ENCODE measurements at regions of chr1 and their contacts with region 1.

Region 1: DNA sequence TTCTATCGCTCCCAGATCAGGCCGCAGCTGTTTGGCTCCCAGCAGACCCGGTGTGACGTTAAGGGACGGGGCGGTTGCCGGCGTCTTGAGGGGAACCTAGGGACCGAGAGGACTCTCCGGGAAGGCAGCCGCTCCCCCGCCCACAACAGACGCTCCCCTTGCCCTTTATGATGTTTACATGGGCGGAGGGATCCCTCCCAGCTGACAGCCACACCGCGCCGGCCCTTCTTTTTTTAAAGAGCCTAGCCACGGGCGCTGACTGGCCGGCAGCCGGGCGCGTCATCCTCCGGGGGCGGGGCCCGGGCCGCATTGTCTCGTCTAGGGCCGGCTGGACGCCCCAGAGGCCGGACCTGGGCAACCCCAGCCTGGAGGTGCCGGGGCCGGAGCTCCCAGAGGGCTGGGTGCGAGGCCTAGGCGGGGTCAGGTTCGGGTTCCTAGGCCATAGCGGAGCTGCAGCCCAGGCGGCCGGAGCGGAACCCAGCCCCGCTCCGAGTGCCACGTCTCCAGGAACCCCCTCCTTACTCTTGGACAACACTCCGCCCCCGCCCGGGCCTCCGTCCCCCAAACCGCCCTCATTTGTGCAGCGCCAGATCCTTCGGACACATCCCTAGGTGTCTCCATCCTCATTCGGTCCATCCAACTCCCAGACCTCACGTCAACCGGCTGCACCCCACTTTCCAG is at the start of gene PCAT6:
- DNase-seq: peak; percentile 70 to 90 (median 83)
- ATAC-seq: peak; percentile 90
- H3K4me3 ChIP-seq: peak within 1 kb of the TSS; percentile 84
- H3K4me3 Mint-ChIP-seq: peak within 1 kb of the TSS; percentile 88 to 94 (median 90)
- H3K27ac ChIP-seq: peak within 1 kb of the TSS; percentile 70
- H3K27ac Mint-ChIP-seq: peak within 1 kb of the TSS; percentile 49 to 93 (median 90)
- H3K4me1 ChIP-seq: peaks cover 19% of the 10 kb centered on the region in 2 donors
- H3K4me1 Mint-ChIP-seq: peaks cover 27 to 42% (median 39%) of the 10 kb centered on the region in 7 donors
- H3K27me3 ChIP-seq: no peaks in the 10 kb centered on the region
- H3K27me3 Mint-ChIP-seq: peaks cover 0 to 18% (median 0%) of the 10 kb centered on the region in 5 donors
- total RNA-seq, gene PCAT6: 0.70 to 1.5 (median 0.94) TPM in 4 of 5 experiments, not detected in the other

Region 2: GRCh38 chr1:202348509-202349205 is 462.1 kb before region 1 on chr1 and contains the start of gene PPP1R12B:
- CTCF ChIA-PET with region 1: no interaction called
- POLR2A ChIA-PET with region 1: no interaction called
- intact Hi-C with region 1: loop called (anchors 5 kb)
- DNase-seq: peak; percentile 83 to 95 (median 92)
- ATAC-seq: peak; percentile 98
- H3K4me3 ChIP-seq: peak within 1 kb of the TSS; percentile 82
- H3K4me3 Mint-ChIP-seq: peak within 1 kb of the TSS; percentile 87 to 97 (median 93)
- H3K27ac ChIP-seq: peak within 1 kb of the TSS; percentile 73
- H3K27ac Mint-ChIP-seq: peak within 1 kb of the TSS; percentile 64 to 97 (median 86)
- H3K4me1 ChIP-seq: peaks cover 3 to 16% of the 10 kb centered on the region in 2 donors
- H3K4me1 Mint-ChIP-seq: peaks cover 22 to 40% (median 34%) of the 10 kb centered on the region in 7 donors
- H3K27me3 ChIP-seq: no peaks in the 10 kb centered on the region
- H3K27me3 Mint-ChIP-seq: no peaks in the 10 kb centered on the region
- total RNA-seq, gene PPP1R12B: 23.6 to 38.1 (median 31.0) TPM

Region 3: DNA sequence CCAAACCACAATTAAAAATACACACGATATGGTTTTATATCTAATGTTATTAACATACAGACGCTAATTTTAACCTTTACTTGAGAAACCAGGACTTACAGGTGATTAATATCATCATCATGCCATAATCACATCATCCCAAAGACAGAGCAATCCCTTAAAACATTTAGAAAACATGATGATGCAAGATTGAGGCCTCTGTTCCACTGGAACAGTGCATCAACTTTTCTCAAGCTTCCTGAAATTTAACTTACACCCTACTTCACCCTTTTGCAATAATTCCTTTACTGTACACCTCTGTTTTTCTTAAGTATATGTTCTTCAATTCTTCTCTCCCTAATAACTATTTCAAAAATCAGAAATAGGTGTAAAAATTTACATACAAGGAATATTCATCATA is 40.6 kb before region 1 on chr1:
- CTCF ChIA-PET with region 1: no interaction called
- POLR2A ChIA-PET with region 1: no interaction called
- intact Hi-C with region 1: no loop called
- DNase-seq: no peak
- ATAC-seq: no peak
- H3K4me3 ChIP-seq: no peak overlapping the region
- H3K4me3 Mint-ChIP-seq: no peak overlapping the region
- H3K27ac ChIP-seq: no peak overlapping the region
- H3K27ac Mint-ChIP-seq: peak overlapping the region in 1 of 9 donors; percentile 38
- H3K4me1 ChIP-seq: no peaks in the 10 kb centered on the region
- H3K4me1 Mint-ChIP-seq: no peaks in the 10 kb centered on the region
- H3K27me3 ChIP-seq: no peaks in the 10 kb centered on the region
- H3K27me3 Mint-ChIP-seq: no peaks in the 10 kb centered on the region

Region 4: GRCh38 chr1:202788800-202789199 is 22.0 kb before region 1 on chr1:
- CTCF ChIA-PET with region 1: no interaction called
- POLR2A ChIA-PET with region 1: no interaction called
- intact Hi-C with region 1: no loop called
- DNase-seq: no peak
- ATAC-seq: no peak
- H3K4me3 ChIP-seq: no peak overlapping the region
- H3K4me3 Mint-ChIP-seq: no peak overlapping the region
- H3K27ac ChIP-seq: no peak overlapping the region
- H3K27ac Mint-ChIP-seq: peak overlapping the region in 2 of 9 donors; percentile 41 to 88
- H3K4me1 ChIP-seq: no peaks in the 10 kb centered on the region
- H3K4me1 Mint-ChIP-seq: peaks cover 14 to 54% (median 40%) of the 10 kb centered on the region in 7 donors
- H3K27me3 ChIP-seq: no peaks in the 10 kb centered on the region
- H3K27me3 Mint-ChIP-seq: no peaks in the 10 kb centered on the region

Region 5: DNA sequence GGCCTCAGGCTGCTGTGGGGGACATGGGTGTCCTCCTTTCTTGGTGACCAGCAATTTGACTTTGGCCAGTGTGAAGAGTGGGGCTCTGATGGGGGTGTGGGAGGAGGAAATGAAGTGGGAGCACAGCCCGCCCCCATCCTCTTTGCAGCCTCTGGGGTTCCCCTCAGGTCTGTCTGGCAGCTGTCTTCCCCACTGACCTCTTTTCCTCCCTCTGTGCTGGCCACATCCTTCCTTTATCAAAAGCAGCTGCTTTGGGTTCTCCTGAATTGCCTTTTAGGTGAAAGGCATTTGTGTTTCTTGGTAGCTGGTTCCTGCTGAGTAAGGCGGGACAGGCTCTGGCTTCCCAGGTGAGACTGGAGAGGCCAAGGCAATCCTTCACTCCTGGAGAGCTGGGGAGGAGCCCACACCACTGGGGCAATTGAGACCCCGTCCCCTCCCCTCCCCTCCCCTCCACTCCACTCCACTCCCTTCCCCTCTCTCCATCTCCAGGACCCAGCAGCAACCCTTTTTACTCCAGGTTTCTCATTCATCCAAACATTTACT is 24.9 kb after region 1 on chr1:
- CTCF ChIA-PET with region 1: no interaction called
- POLR2A ChIA-PET with region 1: no interaction called
- intact Hi-C with region 1: loop called in 1 of 2 experiments (anchors 2 kb)
- DNase-seq: peak in 2 of 9 donors; percentile 12 to 45
- ATAC-seq: peak; percentile 77
- H3K4me3 ChIP-seq: no peak overlapping the region
- H3K4me3 Mint-ChIP-seq: peak overlapping the region in 3 of 10 donors; percentile 9 to 84 (median 48)
- H3K27ac ChIP-seq: no peak overlapping the region
- H3K27ac Mint-ChIP-seq: peak overlapping the region in 2 of 9 donors; percentile 43 to 87
- H3K4me1 ChIP-seq: peaks cover 20% of the 10 kb centered on the region in 2 donors
- H3K4me1 Mint-ChIP-seq: peaks cover 10 to 60% (median 28%) of the 10 kb centered on the region in 7 donors
- H3K27me3 ChIP-seq: no peaks in the 10 kb centered on the region
- H3K27me3 Mint-ChIP-seq: peaks cover 0 to 4% (median 0%) of the 10 kb centered on the region in 5 donors

Region 6: GRCh38 chr1:202926720-202927491 is 116.2 kb after region 1 on chr1 and contains the start of gene KLHL12:
- CTCF ChIA-PET with region 1: no interaction called
- POLR2A ChIA-PET with region 1: no interaction called
- intact Hi-C with region 1: loop called (anchors 1 kb)
- DNase-seq: peak; percentile 88 to 95 (median 94)
- ATAC-seq: peak; percentile 97
- H3K4me3 ChIP-seq: peak within 1 kb of the TSS; percentile 97
- H3K4me3 Mint-ChIP-seq: peak within 1 kb of the TSS; percentile 90 to 96 (median 94)
- H3K27ac ChIP-seq: peak within 1 kb of the TSS; percentile 97
- H3K27ac Mint-ChIP-seq: peak within 1 kb of the TSS; percentile 92 to 97 (median 94)
- H3K4me1 ChIP-seq: peaks cover 19 to 26% of the 10 kb centered on the region in 2 donors
- H3K4me1 Mint-ChIP-seq: peaks cover 17 to 40% (median 34%) of the 10 kb centered on the region in 7 donors
- H3K27me3 ChIP-seq: no peaks in the 10 kb centered on the region
- H3K27me3 Mint-ChIP-seq: peaks cover 0 to 11% (median 0%) of the 10 kb centered on the region in 5 donors
- total RNA-seq, gene KLHL12: 15.6 to 28.0 (median 24.5) TPM

Region 7: GRCh38 chr1:202998836-202999750 is 188.3 kb after region 1 on chr1:
- CTCF ChIA-PET with region 1: no interaction called
- POLR2A ChIA-PET with region 1: no interaction called
- intact Hi-C with region 1: loop called in 1 of 2 experiments (anchors 5 kb)
- DNase-seq: peak; percentile 18 to 74 (median 63)
- ATAC-seq: peak; percentile 89
- H3K4me3 ChIP-seq: no peak overlapping the region
- H3K4me3 Mint-ChIP-seq: peak overlapping the region in 7 of 10 donors; percentile 44 to 75 (median 56)
- H3K27ac ChIP-seq: no peak overlapping the region
- H3K27ac Mint-ChIP-seq: peak overlapping the region in 4 of 9 donors; percentile 23 to 70 (median 52)
- H3K4me1 ChIP-seq: no peaks in the 10 kb centered on the region
- H3K4me1 Mint-ChIP-seq: peaks cover 3 to 10% (median 6%) of the 10 kb centered on the region in 7 donors
- H3K27me3 ChIP-seq: no peaks in the 10 kb centered on the region
- H3K27me3 Mint-ChIP-seq: peaks cover 24 to 40% (median 28%) of the 10 kb centered on the region in 5 donors

Region 8: GRCh38 chr1:203326830-203327683 is 516.3 kb after region 1 on chr1:
- CTCF ChIA-PET with region 1: no interaction called
- POLR2A ChIA-PET with region 1: no interaction called
- intact Hi-C with region 1: loop called in 1 of 2 experiments (anchors 10 kb)
- DNase-seq: peak; percentile 90 to 96 (median 94)
- ATAC-seq: peak; percentile 84
- H3K4me3 ChIP-seq: peak overlapping the region; percentile 72
- H3K4me3 Mint-ChIP-seq: peak overlapping the region; percentile 80 to 89 (median 86)
- H3K27ac ChIP-seq: peak overlapping the region; percentile 98
- H3K27ac Mint-ChIP-seq: peak overlapping the region; percentile 90 to 100 (median 99)
- H3K4me1 ChIP-seq: peaks cover 55 to 56% of the 10 kb centered on the region in 2 donors
- H3K4me1 Mint-ChIP-seq: peaks cover 40 to 73% (median 70%) of the 10 kb centered on the region in 7 donors
- H3K27me3 ChIP-seq: no peaks in the 10 kb centered on the region
- H3K27me3 Mint-ChIP-seq: no peaks in the 10 kb centered on the region